Caco-2 (cell line): ENCODE measurements at regions of chr3 and their contacts with region 1.

Region 1: GRCh38 chr3:188389711-188390342 is 235.9 kb downstream of the LPP start:
- DNase-seq: no peak
- H3K4me3 ChIP-seq: no peak overlapping the region
- H3K4me3 Mint-ChIP-seq: no peak overlapping the region
- H3K27ac Mint-ChIP-seq: peak overlapping the region; percentile 73
- H3K4me1 ChIP-seq: peaks cover 39% of the 10 kb centered on the region
- H3K4me1 Mint-ChIP-seq: peaks cover 32% of the 10 kb centered on the region
- H3K27me3 ChIP-seq: no peaks in the 10 kb centered on the region
- H3K27me3 Mint-ChIP-seq: no peaks in the 10 kb centered on the region
- CTCF ChIP-seq: no peak

Region 2: DNA sequence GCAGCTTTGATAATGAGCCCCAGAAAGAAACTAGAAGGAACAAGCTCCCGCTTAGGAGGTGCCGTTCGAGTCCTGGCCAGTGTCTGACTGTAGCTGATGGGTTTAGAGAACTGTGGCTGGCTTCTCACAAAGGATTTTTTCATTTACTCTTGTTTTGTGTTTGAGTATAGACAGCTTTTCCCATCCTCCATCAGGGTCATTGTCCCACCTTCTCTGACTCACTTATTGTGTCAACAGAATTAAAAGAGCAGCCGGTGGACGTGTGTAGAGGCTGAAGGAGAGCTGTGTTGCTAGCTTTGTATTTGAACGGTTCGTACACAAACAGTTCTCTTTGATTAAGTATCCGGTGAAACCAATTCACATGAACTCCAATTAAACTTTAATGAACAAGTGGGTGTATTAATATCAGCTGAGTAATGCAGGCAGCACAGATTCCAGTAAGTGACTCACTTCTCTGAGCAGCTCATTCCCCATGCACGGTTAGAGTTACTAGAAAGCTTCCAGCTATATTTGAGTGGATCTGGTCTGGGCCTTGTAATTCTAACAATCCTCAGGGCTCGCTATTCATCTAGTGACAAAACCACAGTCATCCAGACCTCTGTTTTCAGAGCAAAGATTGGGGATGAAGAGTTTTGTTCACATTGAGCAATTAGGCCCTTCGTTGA is 94.9 kb before region 1 on chr3:
- CTCF ChIA-PET with region 1: no interaction called
- POLR2A ChIA-PET with region 1: no interaction called
- intact Hi-C with region 1: loop called (anchors 5 kb)
- DNase-seq: peak; percentile 46 to 53
- H3K4me3 ChIP-seq: no peak overlapping the region
- H3K4me3 Mint-ChIP-seq: peak overlapping the region; percentile 53
- H3K27ac Mint-ChIP-seq: peak overlapping the region; percentile 78
- H3K4me1 ChIP-seq: peaks cover 57% of the 10 kb centered on the region
- H3K4me1 Mint-ChIP-seq: peaks cover 68% of the 10 kb centered on the region
- H3K27me3 ChIP-seq: no peaks in the 10 kb centered on the region
- H3K27me3 Mint-ChIP-seq: no peaks in the 10 kb centered on the region
- CTCF ChIP-seq: no peak

Region 3: GRCh38 chr3:188362405-188362831 is 27.4 kb before region 1 on chr3:
- CTCF ChIA-PET with region 1: no interaction called
- POLR2A ChIA-PET with region 1: no interaction called
- intact Hi-C with region 1: no loop called
- DNase-seq: no peak
- H3K4me3 ChIP-seq: no peak overlapping the region
- H3K4me3 Mint-ChIP-seq: no peak overlapping the region
- H3K27ac Mint-ChIP-seq: peak overlapping the region; percentile 5
- H3K4me1 ChIP-seq: no peaks in the 10 kb centered on the region
- H3K4me1 Mint-ChIP-seq: peaks cover 17% of the 10 kb centered on the region
- H3K27me3 ChIP-seq: no peaks in the 10 kb centered on the region
- H3K27me3 Mint-ChIP-seq: no peaks in the 10 kb centered on the region
- CTCF ChIP-seq: no peak

Region 4: DNA sequence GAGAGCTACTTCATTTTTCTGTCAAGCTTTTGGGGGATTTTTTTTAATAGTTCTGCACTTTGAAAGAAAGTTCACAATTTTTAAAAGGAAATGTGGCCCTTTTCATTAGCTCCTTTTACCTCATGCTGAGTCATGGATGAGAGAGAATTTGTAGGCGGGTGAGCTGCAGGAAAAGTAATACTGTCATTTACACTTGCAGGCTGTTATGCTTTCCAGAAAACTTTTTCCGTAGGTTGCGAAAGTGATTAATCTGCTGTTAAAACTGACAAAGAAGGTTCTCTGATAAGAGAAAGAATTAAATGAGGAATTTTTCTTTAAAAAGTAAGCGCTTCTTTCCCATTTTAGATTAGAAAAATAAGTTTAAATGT is 194.3 kb after region 1 on chr3:
- CTCF ChIA-PET with region 1: no interaction called
- POLR2A ChIA-PET with region 1: no interaction called
- intact Hi-C with region 1: loop called (anchors 10 kb)
- DNase-seq: peak in 1 of 2 experiments; percentile 9
- H3K4me3 ChIP-seq: no peak overlapping the region
- H3K4me3 Mint-ChIP-seq: no peak overlapping the region
- H3K27ac Mint-ChIP-seq: no peak overlapping the region
- H3K4me1 ChIP-seq: peaks cover 24% of the 10 kb centered on the region
- H3K4me1 Mint-ChIP-seq: peaks cover 7% of the 10 kb centered on the region
- H3K27me3 ChIP-seq: no peaks in the 10 kb centered on the region
- H3K27me3 Mint-ChIP-seq: no peaks in the 10 kb centered on the region
- CTCF ChIP-seq: no peak

Region 5: GRCh38 chr3:188673646-188674186 is 283.9 kb after region 1 on chr3:
- CTCF ChIA-PET with region 1: no interaction called
- POLR2A ChIA-PET with region 1: no interaction called
- intact Hi-C with region 1: loop called (anchors 10 kb)
- DNase-seq: peak in 1 of 2 experiments; percentile 56
- H3K4me3 ChIP-seq: no peak overlapping the region
- H3K4me3 Mint-ChIP-seq: no peak overlapping the region
- H3K27ac Mint-ChIP-seq: peak overlapping the region; percentile 44
- H3K4me1 ChIP-seq: peaks cover 36% of the 10 kb centered on the region
- H3K4me1 Mint-ChIP-seq: peaks cover 26% of the 10 kb centered on the region
- H3K27me3 ChIP-seq: no peaks in the 10 kb centered on the region
- H3K27me3 Mint-ChIP-seq: no peaks in the 10 kb centered on the region
- CTCF ChIP-seq: no peak

Region 6: DNA sequence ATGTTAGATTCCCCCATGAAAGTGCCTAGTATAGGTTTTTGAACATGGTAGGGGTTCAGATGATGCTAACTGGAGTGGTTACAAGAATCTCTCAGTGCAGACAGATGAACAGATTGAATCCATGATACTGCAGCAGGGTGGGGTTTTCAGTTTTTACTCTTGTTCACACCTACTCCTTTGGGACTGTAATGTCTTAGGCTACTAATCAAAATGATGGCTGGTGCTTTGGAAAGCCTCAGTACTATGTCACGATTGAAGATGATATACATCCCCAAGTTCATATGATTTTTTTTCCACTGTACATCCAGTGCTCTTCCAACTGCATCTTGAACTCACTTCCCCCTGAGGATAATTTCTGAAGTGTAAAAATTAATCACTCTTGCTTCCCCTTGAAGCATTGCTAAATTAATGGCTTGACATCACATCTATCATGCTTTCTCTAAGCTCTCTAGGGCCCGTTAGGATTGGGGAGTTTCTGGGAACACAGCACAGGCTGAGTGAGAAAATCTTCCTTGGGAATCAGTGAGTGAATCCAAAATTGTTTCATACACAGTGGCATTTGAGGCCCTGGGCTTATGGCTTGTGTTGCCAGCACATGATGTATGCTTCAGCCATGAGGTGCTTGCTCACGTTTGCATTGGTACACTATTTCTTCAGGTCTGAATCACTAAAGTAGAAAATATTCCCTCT is 667.0 kb after region 1 on chr3:
- CTCF ChIA-PET with region 1: no interaction called
- POLR2A ChIA-PET with region 1: no interaction called
- intact Hi-C with region 1: no loop called
- DNase-seq: no peak
- H3K4me3 ChIP-seq: no peak overlapping the region
- H3K4me3 Mint-ChIP-seq: no peak overlapping the region
- H3K27ac Mint-ChIP-seq: no peak overlapping the region
- H3K4me1 ChIP-seq: no peaks in the 10 kb centered on the region
- H3K4me1 Mint-ChIP-seq: peaks cover 6% of the 10 kb centered on the region
- H3K27me3 ChIP-seq: no peaks in the 10 kb centered on the region
- H3K27me3 Mint-ChIP-seq: no peaks in the 10 kb centered on the region
- CTCF ChIP-seq: no peak